GM12878 (cell line): ENCODE measurements at regions of chrX and their contacts with region 1.

Region 1: DNA sequence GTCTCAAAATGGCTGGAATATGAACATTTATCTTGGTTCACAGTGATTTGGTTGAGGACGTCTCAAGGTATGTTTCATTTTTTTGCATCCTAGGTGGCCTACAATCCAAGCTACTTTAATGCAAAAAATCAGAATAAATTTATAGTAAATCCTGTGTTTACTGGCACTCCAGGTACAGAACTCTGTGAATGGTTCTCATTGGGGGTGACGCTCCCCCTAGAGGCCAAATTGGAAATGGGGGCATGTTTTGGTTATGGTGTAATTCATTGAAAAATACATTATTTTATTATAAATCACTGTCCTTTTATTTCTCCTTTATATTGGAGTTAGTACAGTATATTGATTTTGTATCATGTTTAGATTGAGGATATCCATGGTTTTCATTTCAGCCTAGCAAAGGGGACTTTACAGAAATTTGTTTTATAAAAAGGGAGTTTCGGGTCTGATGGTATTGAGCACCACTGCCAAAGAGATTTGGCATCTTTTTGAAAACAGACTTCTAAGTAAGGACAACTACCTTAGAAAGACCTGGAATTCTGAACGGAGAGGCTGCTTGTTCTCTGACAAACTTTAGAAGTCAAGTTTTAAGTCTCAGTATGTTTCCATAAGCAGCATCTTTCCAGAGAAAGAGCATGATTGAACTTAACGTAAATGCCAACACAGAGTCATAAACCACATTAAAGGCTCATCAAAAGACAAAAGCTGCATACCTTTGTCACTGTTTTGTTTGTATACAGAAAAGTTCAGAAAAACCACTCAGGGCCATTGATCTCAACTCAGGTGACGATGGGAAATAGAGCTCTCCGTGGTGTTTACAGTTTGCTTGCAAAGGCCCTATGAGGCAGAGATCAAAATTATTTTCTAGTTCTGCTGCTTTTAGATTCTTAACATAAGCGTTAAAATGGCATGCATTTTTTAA is 19.4 kb downstream of the MTM1 start:
- DNase-seq: no peak
- ATAC-seq: peak; percentile 76
- H3K4me3 ChIP-seq: no peak overlapping the region
- H3K27ac ChIP-seq: no peak overlapping the region
- H3K4me1 ChIP-seq: no peaks in the 10 kb centered on the region
- H3K27me3 ChIP-seq: no peaks in the 10 kb centered on the region
- CTCF ChIP-seq: peak; percentile 62 to 77 (median 75)
- EP300 ChIP-seq: no peak
- POLR2A ChIP-seq: no peak
- RAD21 ChIP-seq: peak; percentile 66

Region 2: GRCh38 chrX:149962859-149963757 is 624.7 kb before region 1 on chrX:
- CTCF ChIA-PET with region 1: no interaction called
- POLR2A ChIA-PET with region 1: no interaction called
- RAD21 ChIA-PET with region 1: no interaction called
- SMC1A ChIA-PET with region 1: no interaction called
- in situ Hi-C with region 1: no loop called
- intact Hi-C with region 1: loop called (anchors 5 kb)
- DNase-seq: peak; percentile 5
- ATAC-seq: peak; percentile 98
- H3K4me3 ChIP-seq: no peak overlapping the region
- H3K27ac ChIP-seq: no peak overlapping the region
- H3K4me1 ChIP-seq: no peaks in the 10 kb centered on the region
- H3K27me3 ChIP-seq: no peaks in the 10 kb centered on the region
- CTCF ChIP-seq: peak; percentile 70 to 76 (median 71)
- EP300 ChIP-seq: no peak
- POLR2A ChIP-seq: no peak
- RAD21 ChIP-seq: peak; percentile 76

Region 3: GRCh38 chrX:150429594-150429993 is 158.2 kb before region 1 on chrX:
- CTCF ChIA-PET with region 1: no interaction called
- POLR2A ChIA-PET with region 1: no interaction called
- RAD21 ChIA-PET with region 1: no interaction called
- SMC1A ChIA-PET with region 1: no interaction called
- in situ Hi-C with region 1: no loop called
- intact Hi-C with region 1: no loop called
- DNase-seq: no peak
- ATAC-seq: no peak
- H3K4me3 ChIP-seq: no peak overlapping the region
- H3K27ac ChIP-seq: no peak overlapping the region
- H3K4me1 ChIP-seq: no peaks in the 10 kb centered on the region
- H3K27me3 ChIP-seq: no peaks in the 10 kb centered on the region
- CTCF ChIP-seq: no peak
- EP300 ChIP-seq: no peak
- POLR2A ChIP-seq: no peak
- RAD21 ChIP-seq: no peak

Region 4: DNA sequence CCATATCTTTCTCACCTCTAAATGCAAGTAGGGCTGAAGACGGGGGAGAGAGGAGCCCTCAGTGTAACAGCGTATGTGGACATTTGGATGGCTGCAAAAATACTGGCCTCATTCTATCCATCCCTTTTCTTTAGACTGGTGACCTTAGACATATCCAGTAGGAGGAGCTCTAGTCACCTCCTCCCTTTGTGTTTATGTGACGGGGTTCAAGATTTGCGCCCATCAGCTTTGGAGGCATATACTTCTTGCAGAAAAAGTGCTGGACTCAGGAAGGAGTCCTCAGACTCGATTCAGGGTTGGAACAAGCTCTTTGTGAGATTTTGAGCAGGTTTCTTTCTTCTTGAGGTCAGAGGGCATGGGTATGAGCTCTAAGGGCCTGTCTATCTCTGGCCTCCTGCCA is 138.5 kb before region 1 on chrX:
- CTCF ChIA-PET with region 1: interaction called, 16 read pairs
- POLR2A ChIA-PET with region 1: no interaction called
- RAD21 ChIA-PET with region 1: interaction called, 5 read pairs
- SMC1A ChIA-PET with region 1: interaction called, 4 read pairs
- in situ Hi-C with region 1: no loop called
- intact Hi-C with region 1: no loop called
- DNase-seq: no peak
- ATAC-seq: peak; percentile 64
- H3K4me3 ChIP-seq: no peak overlapping the region
- H3K27ac ChIP-seq: no peak overlapping the region
- H3K4me1 ChIP-seq: no peaks in the 10 kb centered on the region
- H3K27me3 ChIP-seq: no peaks in the 10 kb centered on the region
- CTCF ChIP-seq: peak; percentile 29 to 42 (median 32); a peak in 3 of 6 replicates
- EP300 ChIP-seq: no peak
- POLR2A ChIP-seq: no peak
- RAD21 ChIP-seq: peak; percentile 41

Region 5: DNA sequence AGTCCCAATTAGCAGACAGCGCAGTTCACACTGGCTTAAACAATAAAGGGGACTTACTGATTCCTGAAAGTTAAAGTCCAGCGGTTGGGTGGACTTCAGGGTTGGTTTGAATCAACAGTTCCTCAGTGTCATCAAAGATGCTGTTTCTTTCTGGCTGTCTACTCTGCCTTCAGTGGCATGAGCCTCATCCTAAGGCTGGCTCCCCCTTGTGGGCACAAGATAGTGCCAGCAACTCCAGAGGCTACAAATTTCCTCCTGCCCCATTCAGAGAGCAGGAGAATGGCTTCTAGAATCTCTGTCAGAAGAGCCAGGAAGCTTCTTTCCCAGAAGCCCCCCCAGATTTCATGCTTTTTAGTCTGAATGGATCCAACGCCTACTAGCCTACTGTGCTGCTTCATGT is 101.8 kb before region 1 on chrX:
- CTCF ChIA-PET with region 1: interaction called, 10 read pairs
- POLR2A ChIA-PET with region 1: no interaction called
- RAD21 ChIA-PET with region 1: no interaction called
- SMC1A ChIA-PET with region 1: interaction called, 3 read pairs
- in situ Hi-C with region 1: no loop called
- intact Hi-C with region 1: no loop called
- DNase-seq: no peak
- ATAC-seq: peak; percentile 86
- H3K4me3 ChIP-seq: no peak overlapping the region
- H3K27ac ChIP-seq: no peak overlapping the region
- H3K4me1 ChIP-seq: no peaks in the 10 kb centered on the region
- H3K27me3 ChIP-seq: no peaks in the 10 kb centered on the region; a peak in 1 of 4 replicates
- CTCF ChIP-seq: peak; percentile 46 to 65 (median 58)
- EP300 ChIP-seq: no peak
- POLR2A ChIP-seq: no peak
- RAD21 ChIP-seq: peak; percentile 48

Region 6: GRCh38 chrX:150547375-150548115 is 40.3 kb before region 1 on chrX:
- CTCF ChIA-PET with region 1: interaction called, 15 read pairs
- POLR2A ChIA-PET with region 1: no interaction called
- RAD21 ChIA-PET with region 1: interaction called, 4 read pairs
- SMC1A ChIA-PET with region 1: interaction called, 9 read pairs
- in situ Hi-C with region 1: no loop called
- intact Hi-C with region 1: no loop called
- DNase-seq: no peak
- ATAC-seq: peak; percentile 66
- H3K4me3 ChIP-seq: no peak overlapping the region; the same call in 1 of the 2 replicates
- H3K27ac ChIP-seq: no peak overlapping the region
- H3K4me1 ChIP-seq: peaks cover 7% of the 10 kb centered on the region; the same call in 1 of the 2 replicates
- H3K27me3 ChIP-seq: no peaks in the 10 kb centered on the region; a peak in 2 of 4 replicates
- CTCF ChIP-seq: no peak
- EP300 ChIP-seq: no peak
- POLR2A ChIP-seq: no peak
- RAD21 ChIP-seq: no peak

Region 7: GRCh38 chrX:150568320-150569154 is 19.3 kb before region 1 on chrX and contains the start of gene MTM1:
- CTCF ChIA-PET with region 1: interaction called, 10 read pairs
- POLR2A ChIA-PET with region 1: no interaction called
- RAD21 ChIA-PET with region 1: interaction called, 3 read pairs
- SMC1A ChIA-PET with region 1: interaction called, 10 read pairs
- in situ Hi-C with region 1: no loop called
- intact Hi-C with region 1: no loop called
- DNase-seq: peak; percentile 71
- ATAC-seq: peak; percentile 93
- H3K4me3 ChIP-seq: peak within 1 kb of the TSS; percentile 69
- H3K27ac ChIP-seq: peak within 1 kb of the TSS; percentile 31
- H3K4me1 ChIP-seq: peaks cover 4% of the 10 kb centered on the region; the same call in 1 of the 2 replicates
- H3K27me3 ChIP-seq: no peaks in the 10 kb centered on the region
- CTCF ChIP-seq: no peak
- EP300 ChIP-seq: no peak
- POLR2A ChIP-seq: peak; percentile 61
- RAD21 ChIP-seq: no peak
- polyA plus RNA-seq, gene MTM1: 3.9 to 5.3 TPM

Region 8: GRCh38 chrX:150897421-150898320 is 309.8 kb after region 1 on chrX:
- CTCF ChIA-PET with region 1: no interaction called
- POLR2A ChIA-PET with region 1: no interaction called
- RAD21 ChIA-PET with region 1: no interaction called
- SMC1A ChIA-PET with region 1: no interaction called
- in situ Hi-C with region 1: no loop called
- intact Hi-C with region 1: no loop called
- DNase-seq: no peak
- ATAC-seq: peak; percentile 15; the same call in 2 of the 3 replicates
- H3K4me3 ChIP-seq: peak overlapping the region; percentile 71
- H3K27ac ChIP-seq: peak overlapping the region; percentile 69
- H3K4me1 ChIP-seq: no peaks in the 10 kb centered on the region; the same call in 1 of the 2 replicates
- H3K27me3 ChIP-seq: no peaks in the 10 kb centered on the region
- CTCF ChIP-seq: no peak
- EP300 ChIP-seq: no peak
- POLR2A ChIP-seq: no peak
- RAD21 ChIP-seq: no peak